Tibial artery (tissue), 4 donors: ENCODE measurements at regions of chrX and their contacts with region 1.

Region 1: GRCh38 chrX:20266810-20267606 is at the start of gene RPS6KA3:
- DNase-seq: peak; percentile 89 to 94
- H3K4me3 ChIP-seq: peak within 1 kb of the TSS; percentile 77 to 81
- H3K27ac ChIP-seq: peak within 1 kb of the TSS; percentile 85 to 92
- H3K4me1 ChIP-seq: peaks cover 0 to 5% (median 0%) of the 10 kb centered on the region in 4 donors
- H3K27me3 ChIP-seq: no peaks in the 10 kb centered on the region
- CTCF ChIP-seq: no peak

Region 2: DNA sequence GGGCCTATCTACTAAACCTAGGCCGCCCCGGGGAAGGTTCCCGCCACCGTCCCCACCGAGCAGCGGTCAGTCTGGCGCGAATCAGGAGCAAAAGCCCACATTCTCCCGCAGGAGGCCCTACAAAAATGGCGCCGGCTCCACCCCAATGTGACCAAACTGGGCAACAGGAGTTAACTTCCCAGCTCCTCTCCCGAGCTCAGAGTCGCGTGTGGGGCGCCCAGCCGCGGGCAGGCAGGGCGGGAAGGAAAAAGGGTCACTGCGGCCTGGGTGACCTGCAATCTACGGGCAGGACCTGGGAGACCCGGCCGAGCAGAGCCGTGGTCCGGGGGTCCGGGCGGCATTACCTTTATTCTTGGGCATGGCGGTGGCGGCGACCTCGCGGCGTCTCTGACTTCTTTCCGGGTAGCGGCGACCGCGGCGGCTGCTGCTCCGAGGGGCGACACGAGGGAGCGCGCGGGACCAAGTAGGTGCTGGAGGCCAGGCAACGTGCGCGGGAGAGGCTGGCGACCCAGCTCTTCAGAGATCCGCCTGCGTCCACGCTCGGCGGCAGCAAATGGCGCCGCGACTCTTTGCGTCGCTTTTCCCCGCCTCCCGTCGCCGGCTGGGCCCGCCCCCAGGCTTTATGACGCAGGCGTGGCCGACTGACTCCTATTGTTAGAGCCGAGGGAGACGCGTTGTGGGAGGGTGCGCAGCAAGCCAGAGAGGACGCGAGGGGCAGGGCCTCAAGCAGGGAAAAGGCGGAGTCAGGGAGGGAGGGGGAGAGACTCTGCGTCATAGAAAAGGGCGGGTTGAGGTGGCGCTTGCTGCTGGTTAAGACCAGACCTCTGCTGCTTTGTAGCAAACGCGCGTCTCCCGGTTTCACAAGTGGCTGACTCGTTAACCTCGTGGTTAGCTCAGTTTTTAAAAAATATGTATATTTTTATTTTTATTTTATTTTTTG is 125.5 kb before region 1 on chrX and contains the start of gene EIF1AX:
- intact Hi-C with region 1: loop called (anchors 10 kb)
- DNase-seq: peak; percentile 97 to 98
- H3K4me3 ChIP-seq: peak within 1 kb of the TSS; percentile 78 to 82
- H3K27ac ChIP-seq: peak within 1 kb of the TSS; percentile 82 to 95
- H3K4me1 ChIP-seq: peaks cover 0 to 24% (median 8%) of the 10 kb centered on the region in 4 donors
- H3K27me3 ChIP-seq: no peaks in the 10 kb centered on the region
- CTCF ChIP-seq: no peak